MCF 10A (cell line): ENCODE measurements at regions of chr2 and their contacts with region 1.

Region 1: DNA sequence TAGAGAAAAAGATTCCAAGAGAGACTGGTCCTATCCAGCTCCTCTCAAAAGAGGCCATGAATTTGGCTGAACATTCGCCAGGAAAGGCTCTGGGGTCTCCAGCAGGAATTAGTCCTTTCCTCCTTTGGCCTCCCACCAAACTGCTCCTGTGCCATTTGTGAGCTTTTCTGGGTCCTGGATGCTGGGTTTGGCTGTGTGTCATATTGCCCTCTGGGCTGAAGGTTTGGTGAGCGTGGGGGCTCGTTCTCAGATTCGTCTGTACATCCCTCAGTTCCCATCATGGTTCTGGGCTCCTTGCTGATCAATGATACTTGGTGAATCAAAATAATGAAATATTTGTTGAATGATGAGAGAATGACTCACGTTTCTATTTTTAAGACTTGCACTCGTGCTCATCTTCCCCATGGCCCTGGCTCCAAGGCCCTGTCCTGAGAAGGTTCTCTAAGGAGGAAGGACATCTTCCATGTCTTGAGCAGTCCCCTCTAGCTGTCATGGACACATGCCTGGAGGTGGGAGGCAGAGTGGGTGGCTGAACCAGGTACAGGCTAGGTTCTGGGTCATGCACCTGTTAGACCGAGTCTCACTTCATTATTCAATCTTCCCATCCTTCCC is 47.8 kb upstream of the RHOB start:
- DNase-seq: no peak
- H3K4me3 Mint-ChIP-seq: no peak overlapping the region
- H3K27ac Mint-ChIP-seq: no peak overlapping the region
- H3K4me1 Mint-ChIP-seq: peaks cover 25% of the 10 kb centered on the region
- H3K27me3 Mint-ChIP-seq: no peaks in the 10 kb centered on the region
- CTCF ChIP-seq: no peak

Region 2: DNA sequence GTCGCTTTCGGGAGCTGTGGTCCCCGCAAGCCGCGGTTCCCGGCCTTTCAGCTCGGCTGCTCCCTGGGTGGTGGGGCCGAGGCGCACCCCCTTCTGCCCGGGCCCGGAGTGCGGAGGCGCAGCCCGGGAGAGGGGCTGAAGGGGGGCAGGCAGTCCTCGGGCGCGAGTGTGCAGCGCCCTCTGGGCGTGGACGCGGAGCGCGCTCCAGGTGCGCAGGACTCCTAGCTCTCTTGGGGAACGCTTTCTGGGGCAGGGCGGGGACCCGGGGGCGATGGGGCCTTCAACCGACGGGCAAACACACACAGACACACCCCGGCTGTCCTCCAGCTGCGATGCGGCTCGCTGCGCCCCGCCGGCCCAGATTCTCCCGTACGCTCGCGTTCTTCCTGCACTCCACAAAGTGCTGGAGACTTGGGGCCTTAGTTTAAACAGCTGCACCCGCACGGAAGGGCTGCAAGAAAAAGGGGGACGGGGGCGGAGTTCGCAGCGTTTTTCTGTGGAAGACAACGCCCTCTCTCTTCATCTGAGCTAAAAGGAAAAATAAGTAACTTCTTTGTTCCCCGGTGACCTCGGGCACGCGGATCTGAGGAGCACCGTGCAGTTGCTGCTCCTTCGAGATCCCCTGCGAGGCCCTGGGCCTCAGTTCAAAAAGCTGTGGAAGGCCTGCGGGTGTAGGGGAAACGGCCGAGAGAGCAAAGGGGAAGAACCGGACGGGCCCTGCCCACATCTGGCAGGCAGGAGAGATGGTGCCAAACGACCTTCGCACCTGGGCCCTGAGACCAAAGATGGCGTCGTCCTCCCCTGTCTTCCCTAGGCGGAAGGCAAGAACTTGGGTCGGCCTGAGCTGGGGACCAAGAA is 173.5 kb before region 1 on chr2:
- CTCF ChIA-PET with region 1: no interaction called
- POLR2A ChIA-PET with region 1: no interaction called
- intact Hi-C with region 1: no loop called
- DNase-seq: peak; percentile 81
- H3K4me3 Mint-ChIP-seq: peak overlapping the region; percentile 75
- H3K27ac Mint-ChIP-seq: peak overlapping the region; percentile 59
- H3K4me1 Mint-ChIP-seq: peaks cover 25% of the 10 kb centered on the region
- H3K27me3 Mint-ChIP-seq: no peaks in the 10 kb centered on the region
- CTCF ChIP-seq: peak; percentile 79

Region 3: GRCh38 chr2:20378792-20379519 is 20.1 kb before region 1 on chr2:
- CTCF ChIA-PET with region 1: interaction called, 15 read pairs
- POLR2A ChIA-PET with region 1: no interaction called
- intact Hi-C with region 1: no loop called
- DNase-seq: peak; percentile 83
- H3K4me3 Mint-ChIP-seq: no peak overlapping the region
- H3K27ac Mint-ChIP-seq: no peak overlapping the region
- H3K4me1 Mint-ChIP-seq: no peaks in the 10 kb centered on the region
- H3K27me3 Mint-ChIP-seq: no peaks in the 10 kb centered on the region
- CTCF ChIP-seq: peak; percentile 48

Region 4: DNA sequence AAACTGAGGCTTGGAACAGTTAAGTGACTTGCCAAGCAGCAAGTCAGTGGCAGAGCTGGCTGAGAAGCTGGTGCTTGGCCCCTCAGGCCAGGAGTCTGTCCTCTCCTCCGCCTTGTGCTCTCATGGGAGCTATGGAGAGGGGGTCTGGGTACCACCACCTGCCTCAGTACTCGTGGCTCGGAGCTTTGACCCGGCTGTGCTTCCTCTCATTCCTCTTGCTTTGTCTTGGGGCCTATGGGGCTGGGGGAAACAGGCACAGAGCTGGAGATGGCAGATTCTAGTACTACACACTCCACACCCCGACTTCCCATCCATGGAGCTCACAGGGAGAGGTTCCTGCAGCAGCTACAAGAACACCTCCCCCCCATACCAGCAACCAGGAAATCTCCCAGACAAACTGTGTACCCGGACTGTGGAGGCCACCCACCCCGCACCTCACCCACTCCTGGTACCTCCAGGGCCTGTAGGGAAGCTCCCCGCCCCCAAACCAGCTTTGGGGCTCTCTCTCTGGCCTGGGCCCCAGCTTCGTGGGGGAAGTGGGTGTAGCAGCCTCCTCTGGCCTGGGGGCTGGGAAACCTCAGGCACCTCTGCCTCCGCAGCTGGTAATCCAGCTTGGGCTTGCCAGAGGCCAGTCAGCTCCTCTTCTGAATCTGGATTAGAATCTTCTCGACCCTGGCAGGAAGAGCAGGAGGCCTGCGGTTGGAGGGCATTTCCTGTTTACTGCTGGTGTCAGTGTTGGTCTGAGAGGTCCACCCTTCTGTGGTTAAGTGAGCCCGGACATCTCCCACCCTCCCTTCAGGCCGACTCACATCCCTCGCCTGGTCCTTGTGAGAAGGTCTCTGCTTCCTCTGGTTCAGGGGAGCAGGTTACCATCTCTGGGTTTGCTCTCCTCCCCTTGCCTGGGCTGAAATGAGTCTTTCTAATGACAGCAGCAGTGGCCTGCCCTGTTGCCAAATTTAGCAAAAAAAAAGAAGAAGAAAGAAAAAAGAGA is 25.5 kb after region 1 on chr2:
- CTCF ChIA-PET with region 1: interaction called, 275 read pairs
- POLR2A ChIA-PET with region 1: interaction called, 3 read pairs
- intact Hi-C with region 1: loop called (anchors 2 kb)
- DNase-seq: peak; percentile 61
- H3K4me3 Mint-ChIP-seq: no peak overlapping the region
- H3K27ac Mint-ChIP-seq: peak overlapping the region; percentile 67
- H3K4me1 Mint-ChIP-seq: peaks cover 47% of the 10 kb centered on the region
- H3K27me3 Mint-ChIP-seq: no peaks in the 10 kb centered on the region
- CTCF ChIP-seq: no peak

Region 5: GRCh38 chr2:20438334-20439192 is 39.5 kb after region 1 on chr2:
- CTCF ChIA-PET with region 1: interaction called, 275 read pairs
- POLR2A ChIA-PET with region 1: interaction called, 14 read pairs
- intact Hi-C with region 1: loop called (anchors 1 kb)
- DNase-seq: peak; percentile 89
- H3K4me3 Mint-ChIP-seq: peak overlapping the region; percentile 66
- H3K27ac Mint-ChIP-seq: peak overlapping the region; percentile 82
- H3K4me1 Mint-ChIP-seq: peaks cover 26% of the 10 kb centered on the region
- H3K27me3 Mint-ChIP-seq: no peaks in the 10 kb centered on the region
- CTCF ChIP-seq: no peak

Region 6: GRCh38 chr2:20452551-20452950 is 53.5 kb after region 1 on chr2:
- CTCF ChIA-PET with region 1: interaction called, 14 read pairs
- POLR2A ChIA-PET with region 1: interaction called, 3 read pairs
- intact Hi-C with region 1: no loop called
- DNase-seq: peak; percentile 91
- H3K4me3 Mint-ChIP-seq: no peak overlapping the region
- H3K27ac Mint-ChIP-seq: no peak overlapping the region
- H3K4me1 Mint-ChIP-seq: no peaks in the 10 kb centered on the region
- H3K27me3 Mint-ChIP-seq: no peaks in the 10 kb centered on the region
- CTCF ChIP-seq: peak; percentile 52

Region 7: DNA sequence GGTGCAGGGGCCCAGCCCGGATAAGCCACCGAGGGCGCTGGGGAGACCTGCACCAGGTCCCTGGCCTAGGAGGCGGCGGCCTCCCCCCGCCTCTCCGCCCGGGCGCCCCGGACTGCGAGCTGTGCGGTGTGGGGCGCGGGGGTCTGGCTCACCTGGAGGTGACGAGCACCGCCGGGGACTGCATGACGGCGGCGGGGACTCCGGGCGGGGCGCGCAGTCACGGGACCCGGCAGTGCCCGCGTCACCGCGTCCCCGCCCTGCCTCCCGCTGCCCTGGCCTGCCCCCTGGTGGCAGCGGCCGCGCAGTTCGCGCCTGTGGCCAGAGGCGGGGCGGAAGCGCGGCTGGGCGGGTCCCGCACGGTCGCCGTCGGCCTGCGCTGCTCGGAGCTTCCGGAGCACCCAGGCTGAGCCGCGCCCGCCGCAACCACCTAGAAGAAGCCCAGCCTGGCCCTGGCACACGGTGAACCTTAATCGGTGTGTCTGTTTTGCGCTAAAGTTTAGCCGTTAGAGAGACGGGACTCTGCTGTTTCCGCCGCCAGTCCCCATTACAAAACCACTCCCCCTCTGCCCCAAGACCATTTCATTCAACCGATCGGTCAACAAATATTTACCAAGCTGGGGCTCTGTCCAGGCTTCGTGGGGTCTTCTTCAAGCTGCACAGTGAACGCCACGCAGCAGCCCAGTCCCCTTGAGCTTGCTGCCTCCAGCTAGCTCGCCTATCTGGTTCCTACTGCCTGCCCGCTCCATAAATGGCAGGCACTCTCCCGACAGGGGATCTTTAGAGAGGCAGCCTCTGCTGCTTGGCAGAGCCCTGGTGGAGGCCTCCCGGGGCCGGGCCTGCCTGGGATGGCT is 252.0 kb after region 1 on chr2 and contains the start of gene HS1BP3:
- CTCF ChIA-PET with region 1: interaction called, 61 read pairs
- POLR2A ChIA-PET with region 1: interaction called, 3 read pairs
- intact Hi-C with region 1: no loop called
- DNase-seq: peak; percentile 81
- H3K4me3 Mint-ChIP-seq: peak within 1 kb of the TSS; percentile 82
- H3K27ac Mint-ChIP-seq: peak within 1 kb of the TSS; percentile 62
- H3K4me1 Mint-ChIP-seq: peaks cover 22% of the 10 kb centered on the region
- H3K27me3 Mint-ChIP-seq: peaks cover 12% of the 10 kb centered on the region
- CTCF ChIP-seq: peak; percentile 89
- total RNA-seq, gene HS1BP3: 10.0 and 25.1 TPM in 2 replicates